Psoas muscle (tissue), 8 donors: ENCODE measurements at regions of chr10 and their contacts with region 1.

Region 1: DNA sequence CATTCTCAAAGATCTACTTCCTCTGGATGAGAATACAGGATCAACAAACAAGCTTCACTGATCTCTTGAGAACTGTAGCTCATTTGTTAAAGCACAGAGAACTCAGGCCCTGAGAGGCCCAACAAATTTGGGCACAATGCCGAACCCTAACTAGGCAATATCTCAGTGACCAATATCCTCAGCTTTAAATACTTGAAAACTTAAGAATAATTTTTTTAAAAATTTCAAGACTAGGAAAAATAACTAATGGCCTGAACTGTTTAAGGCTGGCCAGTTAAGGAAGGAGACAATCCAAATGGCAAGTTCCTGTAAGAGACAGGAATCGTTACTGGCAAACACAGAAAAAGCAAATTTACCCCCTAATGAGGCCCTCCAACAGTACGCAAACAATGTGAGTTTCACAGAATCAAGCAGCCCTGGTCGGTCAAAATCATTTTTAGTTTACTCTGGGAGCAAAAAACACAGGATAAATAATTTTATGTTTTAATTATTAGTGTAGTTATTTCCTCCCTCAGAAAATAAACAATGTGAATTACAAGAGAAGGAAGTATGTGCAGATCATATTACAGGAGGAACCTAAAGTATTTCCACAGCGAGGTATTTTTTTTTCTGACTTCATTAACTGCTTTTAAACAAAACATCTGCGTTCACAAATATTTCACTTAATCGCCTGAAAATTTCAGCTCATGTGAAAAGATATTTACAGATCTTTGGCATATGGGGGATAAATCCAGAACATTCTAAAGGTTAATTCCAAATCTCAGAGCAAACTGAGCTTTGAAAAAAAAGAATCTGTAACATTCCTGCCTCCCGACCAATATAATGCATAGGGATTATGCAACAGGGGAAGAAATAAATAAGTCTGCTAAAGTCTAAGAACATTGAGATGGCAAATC is 39.5 kb downstream of the NT5C2 start:
- DNase-seq: no peak
- ATAC-seq: peak in 2 of 4 donors; percentile 22 to 42
- H3K4me3 ChIP-seq: peak overlapping the region; percentile 45
- H3K27ac ChIP-seq: peak overlapping the region; percentile 86
- H3K4me1 ChIP-seq: peaks cover 59% of the 10 kb centered on the region
- H3K27me3 ChIP-seq: no peaks in the 10 kb centered on the region
- CTCF ChIP-seq: no peak

Region 2: DNA sequence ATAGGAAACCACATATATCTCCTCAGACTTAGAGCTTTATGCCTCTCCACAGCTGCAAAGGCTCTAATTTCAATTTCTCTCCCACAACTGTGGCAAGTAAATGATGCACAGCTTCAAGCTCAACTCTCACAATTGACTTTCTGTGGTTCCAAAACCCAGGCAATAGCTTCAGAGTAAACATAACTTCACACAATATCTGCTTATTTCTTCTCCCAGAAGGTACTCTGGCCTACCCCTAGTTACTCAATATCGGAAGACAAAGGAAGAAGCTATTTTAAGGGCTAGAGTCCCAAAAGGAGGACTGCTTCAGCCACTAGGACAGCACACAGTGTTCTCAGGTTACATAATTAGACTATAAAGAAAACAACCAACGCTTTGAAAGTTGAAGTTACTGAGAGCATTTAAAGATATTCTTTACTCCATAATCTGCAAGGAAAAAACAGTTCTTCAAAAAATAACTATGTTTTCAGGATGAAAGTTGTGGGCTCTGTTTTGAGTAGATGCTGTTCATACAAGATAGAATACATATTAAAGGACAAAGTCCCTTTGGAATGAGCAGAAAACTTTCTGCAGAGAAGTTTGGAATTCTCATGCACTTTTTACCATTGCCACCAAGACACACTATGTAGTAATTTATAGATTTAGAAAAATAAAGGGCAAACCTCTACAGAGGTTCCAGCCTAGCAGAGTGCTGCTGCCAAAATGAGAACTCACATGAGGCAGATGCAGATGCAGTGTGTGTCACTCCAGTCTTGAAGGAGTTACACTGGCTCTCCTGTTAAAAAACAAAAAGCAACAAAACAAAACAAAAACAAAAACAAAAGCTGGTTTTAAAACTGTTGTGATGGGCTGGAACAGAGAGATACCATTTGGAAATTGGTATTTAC is 42.3 kb before region 1 on chr10:
- intact Hi-C with region 1: loop called (anchors 5 kb)
- DNase-seq: no peak
- ATAC-seq: peak; percentile 65 to 85 (median 75)
- H3K4me3 ChIP-seq: peak overlapping the region; percentile 26
- H3K27ac ChIP-seq: peak overlapping the region; percentile 70
- H3K4me1 ChIP-seq: peaks cover 92% of the 10 kb centered on the region
- H3K27me3 ChIP-seq: no peaks in the 10 kb centered on the region
- CTCF ChIP-seq: peak; percentile 3

Region 3: DNA sequence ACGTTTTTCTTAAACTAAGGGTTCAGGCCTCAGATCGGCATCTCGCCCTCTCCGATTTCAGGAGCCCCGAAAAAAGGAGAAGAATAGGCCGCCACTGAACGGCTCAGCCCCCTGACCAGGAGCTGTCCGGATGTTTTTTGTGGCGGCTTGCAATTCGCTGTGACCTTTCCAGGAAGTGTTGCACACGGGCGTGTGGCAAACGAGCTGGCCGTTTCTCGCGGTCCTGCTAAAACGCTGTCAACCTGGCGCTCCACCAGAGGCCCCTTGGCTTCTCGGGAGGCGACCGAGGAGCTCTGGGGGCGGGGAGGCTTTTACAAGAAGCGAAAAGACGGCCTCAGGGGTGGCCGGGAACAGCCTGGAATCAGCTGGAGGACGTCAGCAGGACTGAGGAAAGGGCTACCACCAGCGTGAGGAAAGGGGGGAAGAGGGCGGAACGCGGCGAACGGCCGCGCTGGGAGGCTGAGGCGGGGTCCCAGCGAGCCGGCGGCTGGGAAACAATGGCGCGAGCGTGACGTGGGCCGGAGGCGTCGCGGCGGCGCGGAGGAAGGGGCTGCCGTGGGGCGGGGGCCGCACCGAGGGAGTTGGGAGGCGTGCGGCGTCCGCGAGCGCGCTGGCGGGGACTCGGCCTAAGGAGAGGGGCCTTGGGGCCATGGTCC is 39.0 kb after region 1 on chr10:
- intact Hi-C with region 1: loop called (anchors 5 kb)
- DNase-seq: peak; percentile 87 to 92
- ATAC-seq: peak; percentile 56 to 73 (median 69)
- H3K4me3 ChIP-seq: peak overlapping the region; percentile 89
- H3K27ac ChIP-seq: peak overlapping the region; percentile 99
- H3K4me1 ChIP-seq: peaks cover 39% of the 10 kb centered on the region
- H3K27me3 ChIP-seq: no peaks in the 10 kb centered on the region
- CTCF ChIP-seq: no peak